Heart left ventricle (tissue), 16 donors: ENCODE measurements at regions of chr16 and their contacts with region 1.

Region 1: DNA sequence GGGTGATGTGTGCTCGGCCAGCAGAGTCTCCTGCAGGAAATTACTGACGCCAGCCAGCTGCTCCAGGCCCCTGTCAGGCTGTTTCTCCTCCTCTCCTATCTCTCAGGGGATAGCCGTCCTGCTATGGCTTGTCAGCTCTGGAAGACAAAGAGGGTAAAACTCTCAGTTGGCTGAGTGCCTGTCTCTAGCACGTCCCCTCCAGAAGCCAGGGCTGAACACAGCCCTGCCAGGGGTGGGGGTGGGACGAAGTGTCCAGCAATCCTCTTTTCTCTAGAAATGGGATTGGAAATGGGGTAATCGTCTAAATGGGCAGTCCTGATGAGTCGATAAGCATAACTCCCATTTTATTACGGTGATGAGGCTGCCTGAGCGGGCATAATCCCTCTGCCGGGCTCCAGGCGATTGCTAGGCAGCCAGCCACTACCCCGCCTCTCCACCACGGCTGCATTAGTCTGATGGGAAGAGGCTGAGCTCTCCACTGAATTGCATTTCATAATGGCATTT is 89.1 kb upstream of the GNAO1 start:
- DNase-seq: peak; percentile 47 to 73 (median 66)
- ATAC-seq: peak; percentile 84 to 90 (median 90)
- H3K4me3 ChIP-seq: peak overlapping the region in 10 of 12 donors; percentile 28 to 58 (median 38)
- H3K27ac ChIP-seq: peak overlapping the region; percentile 34 to 79 (median 62)
- H3K4me1 ChIP-seq: peaks cover 0 to 18% (median 8%) of the 10 kb centered on the region in 12 donors
- H3K27me3 ChIP-seq: no peaks in the 10 kb centered on the region
- CTCF ChIP-seq: no peak
- POLR2A ChIP-seq: no peak

Region 2: DNA sequence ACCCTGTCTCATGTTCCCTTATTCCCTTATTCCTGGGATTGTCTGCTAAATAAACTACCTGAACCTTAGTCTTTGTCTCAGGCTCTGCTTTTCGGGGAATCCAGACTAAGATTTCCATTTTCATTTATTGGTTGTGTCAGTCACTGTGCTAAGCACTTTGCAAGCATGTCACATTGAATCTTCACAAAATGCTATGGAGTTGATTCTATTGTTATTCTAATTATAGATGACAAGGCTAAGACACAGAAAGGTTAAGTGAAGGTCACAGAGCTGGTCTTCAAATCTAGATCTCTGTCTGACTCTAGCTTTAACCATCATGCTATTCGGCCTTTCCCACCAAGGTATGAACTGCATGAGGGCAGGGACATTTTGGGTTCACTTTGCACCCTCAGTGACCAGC is 213.7 kb before region 1 on chr16:
- intact Hi-C with region 1: no loop called
- DNase-seq: no peak
- ATAC-seq: no peak
- H3K4me3 ChIP-seq: no peak overlapping the region
- H3K27ac ChIP-seq: no peak overlapping the region
- H3K4me1 ChIP-seq: no peaks in the 10 kb centered on the region
- H3K27me3 ChIP-seq: no peaks in the 10 kb centered on the region
- CTCF ChIP-seq: no peak
- POLR2A ChIP-seq: no peak

Region 3: GRCh38 chr16:56163938-56164337 is 61.7 kb after region 1 on chr16:
- intact Hi-C with region 1: loop called in 1 of 10 experiments (anchors 10 kb)
- DNase-seq: no peak
- ATAC-seq: no peak
- H3K4me3 ChIP-seq: no peak overlapping the region
- H3K27ac ChIP-seq: peak overlapping the region in 6 of 12 donors; percentile 7 to 67 (median 48)
- H3K4me1 ChIP-seq: peaks cover 0 to 16% (median 4%) of the 10 kb centered on the region in 12 donors
- H3K27me3 ChIP-seq: no peaks in the 10 kb centered on the region
- CTCF ChIP-seq: no peak
- POLR2A ChIP-seq: no peak